Activated CD4-positive, alpha-beta memory T cell treated with anti-CD3 and anti-CD28 coated beads, Interleukin-2, amount 10 ng/mL, durations not matched to agents 7 days and 5 days (primary cell): ENCODE measurements at regions of chr12 and their contacts with region 1.

Region 1: DNA sequence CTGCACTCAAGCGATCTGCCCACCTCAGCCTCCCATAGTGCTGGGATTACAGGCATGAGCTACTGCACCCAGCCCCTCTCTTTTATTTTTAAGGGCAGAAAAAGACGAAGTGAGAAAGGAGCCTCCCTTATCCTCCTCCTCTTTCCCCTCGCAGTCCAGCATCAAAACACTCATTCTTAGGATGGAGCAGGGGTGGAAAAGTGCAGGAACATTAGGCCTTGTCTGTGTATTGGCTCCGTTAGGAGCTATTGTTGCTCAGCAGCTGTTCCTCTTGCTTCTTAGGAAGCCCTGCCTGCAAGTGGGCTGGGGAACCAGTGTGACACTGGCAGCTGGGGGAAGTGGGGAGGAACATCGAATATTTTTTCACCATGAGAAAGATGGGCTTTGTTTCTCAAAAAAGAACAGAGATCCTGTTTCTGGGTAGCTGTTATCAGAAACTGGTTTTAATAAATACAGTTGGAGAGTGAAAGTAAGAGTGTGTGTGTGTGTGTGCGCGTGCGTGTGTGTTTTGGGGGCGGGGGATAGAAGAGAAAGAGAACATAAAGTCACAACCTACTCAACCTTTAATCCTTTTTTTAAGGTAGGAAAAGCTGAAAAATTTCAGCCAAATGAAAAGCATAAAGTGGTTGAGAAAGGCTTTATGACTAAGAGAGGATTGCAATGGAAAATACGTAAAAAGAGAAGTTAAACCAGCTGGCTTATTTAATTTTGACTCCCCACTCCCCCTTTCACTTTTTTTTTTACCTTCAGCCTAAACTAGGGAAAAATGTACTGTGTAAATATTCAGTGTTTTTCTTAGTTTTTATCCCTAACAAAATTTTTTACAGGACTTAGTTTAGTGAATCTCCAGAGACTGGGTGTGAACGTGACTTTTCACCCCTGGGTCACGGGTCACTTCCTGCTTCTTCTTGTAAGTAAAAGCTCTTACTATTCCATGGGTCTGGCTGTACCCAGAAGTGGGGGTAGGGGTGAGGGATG is 197.2 kb upstream of the PLEKHG7 start:
- DNase-seq: peak; percentile 59
- H3K4me3 Mint-ChIP-seq: peak overlapping the region; percentile 74
- H3K27ac Mint-ChIP-seq: peak overlapping the region; percentile 91
- H3K4me1 Mint-ChIP-seq: peaks cover 46% of the 10 kb centered on the region
- H3K27me3 Mint-ChIP-seq: no peaks in the 10 kb centered on the region

Region 2: GRCh38 chr12:92457458-92458180 is 47.9 kb before region 1 on chr12:
- CTCF ChIA-PET with region 1: no interaction called
- POLR2A ChIA-PET with region 1: no interaction called
- DNase-seq: no peak
- H3K4me3 Mint-ChIP-seq: no peak overlapping the region
- H3K27ac Mint-ChIP-seq: no peak overlapping the region
- H3K4me1 Mint-ChIP-seq: peaks cover 12% of the 10 kb centered on the region
- H3K27me3 Mint-ChIP-seq: no peaks in the 10 kb centered on the region

Region 3: GRCh38 chr12:92469837-92470236 is 35.7 kb before region 1 on chr12:
- CTCF ChIA-PET with region 1: no interaction called
- POLR2A ChIA-PET with region 1: no interaction called
- DNase-seq: no peak
- H3K4me3 Mint-ChIP-seq: no peak overlapping the region
- H3K27ac Mint-ChIP-seq: no peak overlapping the region
- H3K4me1 Mint-ChIP-seq: peaks cover 6% of the 10 kb centered on the region
- H3K27me3 Mint-ChIP-seq: no peaks in the 10 kb centered on the region

Region 4: GRCh38 chr12:92493816-92494215 is 11.7 kb before region 1 on chr12:
- CTCF ChIA-PET with region 1: interaction called, 7 read pairs
- POLR2A ChIA-PET with region 1: interaction called, 12 read pairs
- DNase-seq: no peak
- H3K4me3 Mint-ChIP-seq: no peak overlapping the region
- H3K27ac Mint-ChIP-seq: no peak overlapping the region
- H3K4me1 Mint-ChIP-seq: peaks cover 18% of the 10 kb centered on the region
- H3K27me3 Mint-ChIP-seq: no peaks in the 10 kb centered on the region

Region 5: DNA sequence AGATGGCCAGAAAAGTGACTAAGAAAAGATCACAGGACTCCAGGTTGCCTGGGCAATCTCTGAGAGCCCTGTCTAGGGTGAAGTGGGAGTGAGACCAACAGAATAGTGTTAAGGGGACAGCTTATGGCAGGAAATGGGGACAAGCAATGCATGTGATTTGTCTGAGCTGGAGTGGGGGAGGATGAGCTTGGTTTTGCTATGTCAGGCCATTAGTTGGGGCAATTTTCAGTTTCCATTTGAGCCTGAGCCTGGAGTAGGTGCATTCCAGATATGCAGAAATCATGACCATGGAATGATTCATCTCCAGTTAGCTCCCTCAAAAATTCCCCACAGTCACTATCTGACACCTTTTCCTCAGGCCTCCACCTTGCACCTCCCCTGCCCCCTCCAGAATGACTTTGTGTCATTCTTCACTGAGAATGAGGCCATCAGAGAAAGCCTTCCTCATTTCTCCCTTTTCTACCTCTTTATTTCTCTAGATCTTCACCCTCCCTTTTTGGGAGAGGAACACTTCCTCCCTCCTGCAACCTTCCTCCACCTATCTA is 46.4 kb after region 1 on chr12:
- CTCF ChIA-PET with region 1: interaction called, 11 read pairs
- POLR2A ChIA-PET with region 1: interaction called, 14 read pairs
- DNase-seq: no peak
- H3K4me3 Mint-ChIP-seq: no peak overlapping the region
- H3K27ac Mint-ChIP-seq: no peak overlapping the region
- H3K4me1 Mint-ChIP-seq: peaks cover 26% of the 10 kb centered on the region
- H3K27me3 Mint-ChIP-seq: no peaks in the 10 kb centered on the region

Region 6: DNA sequence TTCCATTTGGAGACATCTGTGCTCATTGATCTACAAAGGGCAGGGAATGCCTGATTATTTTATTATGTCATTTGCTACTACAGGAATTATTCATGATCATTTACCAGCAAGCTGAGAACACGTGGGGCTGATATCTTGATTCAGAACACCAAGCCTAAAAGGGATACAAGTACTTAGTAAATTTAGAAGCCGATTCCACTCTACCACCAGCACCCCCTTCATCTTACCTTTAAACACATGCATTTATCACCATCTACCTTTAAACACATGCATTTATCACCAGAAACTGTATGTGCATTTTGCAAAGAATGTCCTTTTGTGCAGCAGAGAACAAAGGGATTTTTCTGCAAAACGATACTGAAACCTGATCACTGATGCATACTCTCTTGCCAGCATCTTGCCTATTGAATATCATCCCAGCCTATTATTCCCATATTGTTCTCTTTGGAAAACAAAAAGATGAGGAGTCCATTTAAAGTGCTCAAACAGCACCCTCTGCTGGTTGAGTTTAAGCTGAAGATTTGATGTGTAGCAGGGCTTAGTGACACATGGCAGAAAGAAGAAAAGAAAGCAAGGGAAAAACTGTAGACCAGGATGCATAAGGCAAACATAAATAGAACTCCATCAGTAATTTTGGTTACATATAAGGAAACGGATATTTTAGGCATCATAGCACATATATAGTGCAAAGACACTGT is 64.7 kb after region 1 on chr12:
- CTCF ChIA-PET with region 1: interaction called, 41 read pairs
- POLR2A ChIA-PET with region 1: interaction called, 6 read pairs
- DNase-seq: peak; percentile 39
- H3K4me3 Mint-ChIP-seq: no peak overlapping the region
- H3K27ac Mint-ChIP-seq: no peak overlapping the region
- H3K4me1 Mint-ChIP-seq: peaks cover 22% of the 10 kb centered on the region
- H3K27me3 Mint-ChIP-seq: no peaks in the 10 kb centered on the region